CD4-positive, alpha-beta memory T cell (primary cell): ENCODE measurements at regions of chr14 and their contacts with region 1.

Region 1: GRCh38 chr14:95534299-95535225 is at the start of gene GLRX5:
- DNase-seq: peak; percentile 99 to 100 (median 99)
- H3K4me3 ChIP-seq: peak within 1 kb of the TSS; percentile 48 to 76
- H3K4me3 Mint-ChIP-seq: peak within 1 kb of the TSS; percentile 90 to 97 (median 96)
- H3K27ac ChIP-seq: peak within 1 kb of the TSS; percentile 77
- H3K27ac Mint-ChIP-seq: peak within 1 kb of the TSS; percentile 91 to 99 (median 95)
- H3K4me1 ChIP-seq: peaks cover 50% of the 10 kb centered on the region
- H3K4me1 Mint-ChIP-seq: peaks cover 52 to 87% (median 67%) of the 10 kb centered on the region in 4 donors
- H3K27me3 ChIP-seq: no peaks in the 10 kb centered on the region
- H3K27me3 Mint-ChIP-seq: no peaks in the 10 kb centered on the region
- total RNA-seq, gene GLRX5: 17.6 to 18.7 TPM

Region 2: GRCh38 chr14:95157327-95158189 is 377.0 kb before region 1 on chr14 and contains the start of gene DICER1:
- CTCF ChIA-PET with region 1: no interaction called
- POLR2A ChIA-PET with region 1: interaction called, 4 read pairs
- intact Hi-C with region 1: loop called (anchors 1 kb)
- DNase-seq: peak; percentile 88 to 96 (median 92)
- H3K4me3 ChIP-seq: peak within 1 kb of the TSS; percentile 73 to 88
- H3K4me3 Mint-ChIP-seq: peak within 1 kb of the TSS; percentile 95 to 99 (median 98)
- H3K27ac ChIP-seq: peak within 1 kb of the TSS; percentile 83
- H3K27ac Mint-ChIP-seq: peak within 1 kb of the TSS; percentile 98 to 100 (median 99)
- H3K4me1 ChIP-seq: peaks cover 44% of the 10 kb centered on the region
- H3K4me1 Mint-ChIP-seq: peaks cover 33 to 50% (median 39%) of the 10 kb centered on the region in 4 donors
- H3K27me3 ChIP-seq: no peaks in the 10 kb centered on the region
- H3K27me3 Mint-ChIP-seq: no peaks in the 10 kb centered on the region
- total RNA-seq, gene DICER1: 58.8 to 62.8 TPM

Region 3: DNA sequence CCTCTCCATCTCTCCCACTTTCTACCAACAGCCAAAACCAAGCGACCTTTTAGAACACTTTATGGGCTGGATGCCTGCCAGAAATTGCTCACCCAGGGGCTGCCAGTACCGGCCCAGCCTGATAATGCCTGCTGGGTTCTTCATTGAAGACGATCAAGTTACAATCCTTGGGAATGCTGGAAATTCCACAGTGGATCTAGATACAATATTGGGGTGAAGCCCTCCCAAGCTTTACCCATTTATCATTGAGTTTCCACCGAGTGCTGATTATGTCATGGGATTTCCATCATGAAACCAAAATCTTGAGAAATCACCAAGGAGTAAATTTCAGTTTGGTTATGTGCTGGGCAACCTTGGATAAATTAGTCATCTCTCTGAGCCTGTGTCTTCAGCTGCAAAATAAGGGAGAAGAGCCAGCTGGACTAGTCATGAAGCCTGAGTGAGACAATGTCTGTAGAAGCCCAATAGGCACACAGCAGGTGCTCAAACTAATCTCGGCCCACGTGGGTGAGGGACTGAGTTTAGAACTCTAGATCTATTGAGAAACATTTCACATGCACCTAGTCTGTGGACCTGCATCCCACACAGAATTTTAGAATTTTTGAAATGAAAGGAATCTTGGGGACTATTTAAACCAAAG is 139.3 kb before region 1 on chr14:
- CTCF ChIA-PET with region 1: no interaction called
- POLR2A ChIA-PET with region 1: no interaction called
- intact Hi-C with region 1: no loop called
- DNase-seq: no peak
- H3K4me3 ChIP-seq: no peak overlapping the region
- H3K4me3 Mint-ChIP-seq: no peak overlapping the region
- H3K27ac ChIP-seq: no peak overlapping the region
- H3K27ac Mint-ChIP-seq: no peak overlapping the region
- H3K4me1 ChIP-seq: no peaks in the 10 kb centered on the region
- H3K4me1 Mint-ChIP-seq: no peaks in the 10 kb centered on the region
- H3K27me3 ChIP-seq: no peaks in the 10 kb centered on the region
- H3K27me3 Mint-ChIP-seq: peaks cover 0 to 5% of the 10 kb centered on the region in 2 donors

Region 4: GRCh38 chr14:96362965-96363756 is 828.6 kb after region 1 on chr14 and contains the starts of genes ATG2B and GSKIP:
- CTCF ChIA-PET with region 1: no interaction called
- POLR2A ChIA-PET with region 1: no interaction called
- intact Hi-C with region 1: loop called (anchors 1 kb)
- DNase-seq: peak; percentile 95 to 99 (median 97)
- H3K4me3 ChIP-seq: peak within 1 kb of the TSS; percentile 82 to 92
- H3K4me3 Mint-ChIP-seq: peak within 1 kb of the TSS; percentile 83 to 95 (median 92)
- H3K27ac ChIP-seq: peak within 1 kb of the TSS; percentile 97
- H3K27ac Mint-ChIP-seq: peak within 1 kb of the TSS; percentile 84 to 97 (median 94)
- H3K4me1 ChIP-seq: peaks cover 46% of the 10 kb centered on the region
- H3K4me1 Mint-ChIP-seq: peaks cover 36 to 59% (median 49%) of the 10 kb centered on the region in 4 donors
- H3K27me3 ChIP-seq: no peaks in the 10 kb centered on the region
- H3K27me3 Mint-ChIP-seq: no peaks in the 10 kb centered on the region
- total RNA-seq, gene ATG2B: 28.4 to 37.8 TPM
- total RNA-seq, gene GSKIP: 24.3 to 25.3 TPM